Mammary epithelial cell (primary cell): ENCODE measurements at regions of chr12 and their contacts with region 1.

Region 1: GRCh38 chr12:121786441-121786825 is 7.1 kb downstream of the RHOF start:
- DNase-seq: peak; percentile 99
- H3K4me3 ChIP-seq: no peak overlapping the region
- H3K27ac ChIP-seq: peak overlapping the region; percentile 4
- H3K4me1 ChIP-seq: peaks cover 21% of the 10 kb centered on the region
- H3K27me3 ChIP-seq: no peaks in the 10 kb centered on the region
- CTCF ChIP-seq: peak in 1 of 2 donors; percentile 12

Region 2: GRCh38 chr12:121499929-121500793 is 286.3 kb before region 1 on chr12:
- CTCF ChIA-PET with region 1: interaction called, 10 read pairs
- dilution Hi-C with region 1: no loop called
- in situ Hi-C with region 1: no loop called
- intact Hi-C with region 1: no loop called
- DNase-seq: peak; percentile 43
- H3K4me3 ChIP-seq: no peak overlapping the region
- H3K27ac ChIP-seq: no peak overlapping the region
- H3K4me1 ChIP-seq: no peaks in the 10 kb centered on the region
- H3K27me3 ChIP-seq: no peaks in the 10 kb centered on the region
- CTCF ChIP-seq: peak; percentile 94 to 97